HCT116 (cell line): ENCODE measurements at regions of chr11 and their contacts with region 1.

Region 1: GRCh38 chr11:85854557-85855340 is 434 bp upstream of the CCDC83 start:
- DNase-seq: peak; percentile 72
- ATAC-seq: peak; percentile 97
- H3K4me3 ChIP-seq: peak overlapping the region; percentile 25 to 50
- H3K27ac ChIP-seq: no peak overlapping the region
- H3K4me1 ChIP-seq: peaks cover 2 to 14% of the 10 kb centered on the region in 2 experiments; a peak in 3 of 4 replicates
- H3K27me3 ChIP-seq: no peaks in the 10 kb centered on the region
- CTCF ChIP-seq: peak; percentile 56 to 91 (median 58)
- POLR2A ChIP-seq: no peak
- RAD21 ChIP-seq: peak; percentile 99

Region 2: GRCh38 chr11:85558411-85558810 is 296.3 kb before region 1 on chr11:
- CTCF ChIA-PET with region 1: no interaction called
- POLR2A ChIA-PET with region 1: no interaction called
- RAD21 ChIA-PET with region 1: no interaction called
- intact Hi-C with region 1: no loop called
- DNase-seq: no peak
- ATAC-seq: no peak
- H3K4me3 ChIP-seq: no peak overlapping the region
- H3K27ac ChIP-seq: no peak overlapping the region
- H3K4me1 ChIP-seq: no peaks in the 10 kb centered on the region
- H3K27me3 ChIP-seq: no peaks in the 10 kb centered on the region
- CTCF ChIP-seq: no peak
- POLR2A ChIP-seq: no peak
- RAD21 ChIP-seq: no peak

Region 3: GRCh38 chr11:86041975-86042378 is 187.2 kb after region 1 on chr11:
- CTCF ChIA-PET with region 1: interaction called, 3 read pairs
- POLR2A ChIA-PET with region 1: no interaction called
- RAD21 ChIA-PET with region 1: no interaction called
- intact Hi-C with region 1: loop called (anchors 2 kb)
- DNase-seq: peak; percentile 76
- ATAC-seq: peak; percentile 86
- H3K4me3 ChIP-seq: no peak overlapping the region
- H3K27ac ChIP-seq: no peak overlapping the region
- H3K4me1 ChIP-seq: peaks cover 0 to 7% of the 10 kb centered on the region in 2 experiments; a peak in 3 of 4 replicates
- H3K27me3 ChIP-seq: no peaks in the 10 kb centered on the region
- CTCF ChIP-seq: peak; percentile 78 to 96 (median 79); a peak in 5 of 6 replicates
- POLR2A ChIP-seq: no peak
- RAD21 ChIP-seq: peak; percentile 84

Region 4: DNA sequence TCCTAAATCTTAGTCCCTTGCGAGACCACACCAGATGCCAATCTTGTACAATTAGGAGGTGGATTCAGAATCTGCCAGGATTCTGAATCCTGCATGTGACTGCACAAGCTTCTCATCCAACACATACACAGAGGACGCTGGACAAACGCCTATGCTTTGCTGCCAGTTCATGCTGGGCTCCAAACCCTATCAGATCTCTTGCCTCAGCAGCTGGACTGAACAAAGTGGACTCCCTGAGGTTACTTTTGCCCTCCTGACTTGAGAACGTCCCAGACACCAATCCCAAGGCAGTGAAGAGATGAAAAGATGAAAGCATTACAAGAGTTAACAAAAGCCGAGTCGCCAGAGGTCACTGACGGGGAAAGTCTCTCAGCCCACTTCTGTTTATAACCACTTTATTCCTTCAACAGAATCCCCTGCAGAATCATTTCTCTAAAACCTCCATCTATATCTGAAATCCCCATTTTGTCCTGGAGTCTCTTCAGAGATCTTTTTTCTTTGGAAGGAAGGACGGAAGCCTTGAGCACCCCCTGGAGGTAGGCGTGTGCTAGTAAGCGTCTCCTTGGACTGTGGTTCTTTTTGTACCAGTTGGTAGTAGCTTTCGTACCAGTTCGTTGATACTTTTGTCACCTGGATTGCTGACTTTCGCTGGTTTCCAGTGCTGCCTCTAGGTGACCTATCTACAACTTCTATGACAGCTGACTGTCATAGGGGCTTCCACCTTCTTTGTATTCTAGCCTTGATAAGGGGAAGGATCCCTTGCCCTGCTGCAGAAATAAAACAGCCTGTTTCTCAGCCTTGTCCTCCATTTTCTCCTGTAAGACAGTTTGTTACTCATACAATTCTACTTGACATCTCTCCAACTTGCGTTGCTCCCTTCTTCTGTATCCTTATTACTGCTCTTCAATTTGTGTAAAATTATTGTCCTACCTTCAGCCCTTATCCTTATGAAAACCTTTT is 363.7 kb after region 1 on chr11:
- CTCF ChIA-PET with region 1: no interaction called
- POLR2A ChIA-PET with region 1: no interaction called
- RAD21 ChIA-PET with region 1: interaction called in 1 of 2 experiments, 4 read pairs
- intact Hi-C with region 1: loop called (anchors 2 kb)
- DNase-seq: peak; percentile 66
- ATAC-seq: peak; percentile 96
- H3K4me3 ChIP-seq: peak overlapping the region; percentile 28 to 50
- H3K27ac ChIP-seq: no peak overlapping the region
- H3K4me1 ChIP-seq: peaks cover 0 to 10% of the 10 kb centered on the region in 2 experiments; a peak in 1 of 4 replicates
- H3K27me3 ChIP-seq: no peaks in the 10 kb centered on the region
- CTCF ChIP-seq: peak; percentile 71 to 92 (median 87); a peak in 5 of 6 replicates
- POLR2A ChIP-seq: no peak
- RAD21 ChIP-seq: peak; percentile 81

Region 5: DNA sequence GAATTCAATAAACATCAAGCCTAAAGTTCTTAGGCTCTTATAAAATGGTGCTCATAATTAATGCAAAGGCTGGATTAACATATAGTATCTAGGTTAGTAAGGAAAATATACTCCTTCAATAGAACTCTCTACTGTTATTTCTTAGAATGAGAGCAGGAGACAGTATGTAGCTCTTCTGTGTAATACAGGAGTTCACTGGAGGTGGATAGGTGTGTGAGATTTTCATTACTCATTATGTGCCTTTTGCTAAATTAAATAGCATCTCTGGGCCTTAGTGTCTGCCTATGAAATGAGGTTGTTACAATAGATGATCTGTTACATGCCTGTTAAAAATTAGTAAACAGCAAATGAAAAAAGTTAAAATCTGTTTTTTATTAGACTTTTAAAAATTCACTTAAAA is 410.4 kb after region 1 on chr11:
- CTCF ChIA-PET with region 1: no interaction called
- POLR2A ChIA-PET with region 1: no interaction called
- RAD21 ChIA-PET with region 1: no interaction called
- intact Hi-C with region 1: no loop called
- DNase-seq: no peak
- ATAC-seq: no peak
- H3K4me3 ChIP-seq: no peak overlapping the region
- H3K27ac ChIP-seq: no peak overlapping the region
- H3K4me1 ChIP-seq: no peaks in the 10 kb centered on the region
- H3K27me3 ChIP-seq: no peaks in the 10 kb centered on the region
- CTCF ChIP-seq: no peak
- POLR2A ChIP-seq: no peak
- RAD21 ChIP-seq: no peak

Region 6: GRCh38 chr11:86418917-86419316 is 564.2 kb after region 1 on chr11:
- CTCF ChIA-PET with region 1: interaction called, 3 read pairs
- POLR2A ChIA-PET with region 1: no interaction called
- RAD21 ChIA-PET with region 1: no interaction called
- intact Hi-C with region 1: loop called (anchors 10 kb)
- DNase-seq: no peak
- ATAC-seq: peak; percentile 73
- H3K4me3 ChIP-seq: no peak overlapping the region
- H3K27ac ChIP-seq: no peak overlapping the region
- H3K4me1 ChIP-seq: no peaks in the 10 kb centered on the region
- H3K27me3 ChIP-seq: no peaks in the 10 kb centered on the region
- CTCF ChIP-seq: peak in 1 of 3 experiments; percentile 41; a peak in 2 of 6 replicates
- POLR2A ChIP-seq: no peak
- RAD21 ChIP-seq: peak; percentile 53; the same call in 1 of the 2 replicates

Region 7: GRCh38 chr11:86608251-86608799 is 753.6 kb after region 1 on chr11:
- CTCF ChIA-PET with region 1: interaction called, 3 read pairs
- POLR2A ChIA-PET with region 1: no interaction called
- RAD21 ChIA-PET with region 1: no interaction called
- intact Hi-C with region 1: loop called (anchors 10 kb)
- DNase-seq: peak; percentile 67
- ATAC-seq: peak; percentile 89
- H3K4me3 ChIP-seq: peak overlapping the region; percentile 4 to 18; a peak in 2 of 4 replicates
- H3K27ac ChIP-seq: no peak overlapping the region
- H3K4me1 ChIP-seq: peaks cover 0 to 7% of the 10 kb centered on the region in 2 experiments; a peak in 1 of 4 replicates
- H3K27me3 ChIP-seq: no peaks in the 10 kb centered on the region
- CTCF ChIP-seq: peak; percentile 93 to 100 (median 99)
- POLR2A ChIP-seq: no peak
- RAD21 ChIP-seq: peak; percentile 75